Activated CD4-positive, alpha-beta memory T cell treated with anti-CD3 and anti-CD28 coated beads for 36 hours (primary cell): ENCODE measurements at regions of chr11 and their contacts with region 1.

Region 1: DNA sequence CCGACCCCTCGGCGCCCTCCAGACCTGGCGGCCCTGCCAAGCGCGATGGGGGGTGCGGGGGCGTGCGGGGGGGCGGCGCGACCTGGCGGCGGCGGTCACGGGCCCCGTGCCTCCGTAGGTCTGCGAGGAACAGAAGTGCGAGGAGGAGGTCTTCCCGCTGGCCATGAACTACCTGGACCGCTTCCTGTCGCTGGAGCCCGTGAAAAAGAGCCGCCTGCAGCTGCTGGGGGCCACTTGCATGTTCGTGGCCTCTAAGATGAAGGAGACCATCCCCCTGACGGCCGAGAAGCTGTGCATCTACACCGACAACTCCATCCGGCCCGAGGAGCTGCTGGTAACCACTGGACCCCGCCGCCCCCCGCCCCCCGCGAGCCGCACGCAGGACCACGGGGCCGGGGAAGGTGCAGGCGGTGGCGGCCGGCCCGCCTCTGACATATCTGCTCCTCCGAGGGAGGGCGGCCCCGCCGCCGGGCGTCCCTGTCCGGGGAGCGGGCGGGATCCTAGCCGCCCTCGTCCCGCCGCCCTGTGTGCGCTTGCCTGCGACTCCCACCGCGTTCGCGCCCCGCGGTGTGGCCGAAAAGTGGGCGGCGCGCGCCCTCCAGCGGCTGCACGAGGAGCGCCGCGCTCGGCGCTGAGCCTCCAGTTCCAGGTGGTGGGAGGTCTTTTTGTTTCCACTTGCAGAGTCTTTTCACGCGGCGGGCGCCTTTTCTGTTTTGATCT is 2.1 kb downstream of the CCND1 start:
- DNase-seq: peak; percentile 81
- H3K4me3 Mint-ChIP-seq: peak overlapping the region; percentile 57
- H3K27ac Mint-ChIP-seq: no peak overlapping the region
- H3K4me1 Mint-ChIP-seq: peaks cover 17% of the 10 kb centered on the region
- H3K27me3 Mint-ChIP-seq: peaks cover 22% of the 10 kb centered on the region

Region 2: GRCh38 chr11:69101115-69101791 is 541.8 kb before region 1 on chr11:
- CTCF ChIA-PET with region 1: interaction called, 62 read pairs
- POLR2A ChIA-PET with region 1: no interaction called
- intact Hi-C with region 1: loop called (anchors 1 kb)
- DNase-seq: peak; percentile 79
- H3K4me3 Mint-ChIP-seq: no peak overlapping the region
- H3K27ac Mint-ChIP-seq: no peak overlapping the region
- H3K4me1 Mint-ChIP-seq: peaks cover 2% of the 10 kb centered on the region
- H3K27me3 Mint-ChIP-seq: peaks cover 4% of the 10 kb centered on the region

Region 3: GRCh38 chr11:69540118-69540502 is 103.0 kb before region 1 on chr11:
- CTCF ChIA-PET with region 1: no interaction called
- POLR2A ChIA-PET with region 1: no interaction called
- intact Hi-C with region 1: no loop called
- DNase-seq: no peak
- H3K4me3 Mint-ChIP-seq: no peak overlapping the region
- H3K27ac Mint-ChIP-seq: no peak overlapping the region
- H3K4me1 Mint-ChIP-seq: no peaks in the 10 kb centered on the region
- H3K27me3 Mint-ChIP-seq: peaks cover 36% of the 10 kb centered on the region

Region 4: DNA sequence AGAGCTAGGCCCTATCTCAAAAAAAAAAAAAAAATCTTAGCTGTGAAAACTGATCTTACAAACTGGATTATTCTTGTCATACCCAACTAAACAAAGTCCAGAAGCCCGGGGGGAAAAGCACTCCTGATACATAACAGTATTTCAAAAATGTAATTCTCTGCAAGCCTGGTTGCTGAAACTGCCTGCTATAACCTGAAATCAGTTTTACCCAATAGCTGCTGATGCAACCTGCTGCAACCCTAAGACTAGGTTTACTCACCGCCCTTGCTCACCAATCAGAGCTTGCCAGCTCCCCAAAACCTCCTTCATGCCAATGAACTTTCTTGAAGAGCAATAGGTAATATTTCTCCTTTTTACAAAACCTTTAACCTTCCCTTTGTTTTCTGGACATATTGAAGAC is 48.4 kb after region 1 on chr11:
- CTCF ChIA-PET with region 1: no interaction called
- POLR2A ChIA-PET with region 1: no interaction called
- intact Hi-C with region 1: no loop called
- DNase-seq: peak; percentile 31
- H3K4me3 Mint-ChIP-seq: no peak overlapping the region
- H3K27ac Mint-ChIP-seq: no peak overlapping the region
- H3K4me1 Mint-ChIP-seq: peaks cover 6% of the 10 kb centered on the region
- H3K27me3 Mint-ChIP-seq: peaks cover 36% of the 10 kb centered on the region